Natural killer cell (primary cell): ENCODE measurements at regions of chr13 and their contacts with region 1.

Region 1: DNA sequence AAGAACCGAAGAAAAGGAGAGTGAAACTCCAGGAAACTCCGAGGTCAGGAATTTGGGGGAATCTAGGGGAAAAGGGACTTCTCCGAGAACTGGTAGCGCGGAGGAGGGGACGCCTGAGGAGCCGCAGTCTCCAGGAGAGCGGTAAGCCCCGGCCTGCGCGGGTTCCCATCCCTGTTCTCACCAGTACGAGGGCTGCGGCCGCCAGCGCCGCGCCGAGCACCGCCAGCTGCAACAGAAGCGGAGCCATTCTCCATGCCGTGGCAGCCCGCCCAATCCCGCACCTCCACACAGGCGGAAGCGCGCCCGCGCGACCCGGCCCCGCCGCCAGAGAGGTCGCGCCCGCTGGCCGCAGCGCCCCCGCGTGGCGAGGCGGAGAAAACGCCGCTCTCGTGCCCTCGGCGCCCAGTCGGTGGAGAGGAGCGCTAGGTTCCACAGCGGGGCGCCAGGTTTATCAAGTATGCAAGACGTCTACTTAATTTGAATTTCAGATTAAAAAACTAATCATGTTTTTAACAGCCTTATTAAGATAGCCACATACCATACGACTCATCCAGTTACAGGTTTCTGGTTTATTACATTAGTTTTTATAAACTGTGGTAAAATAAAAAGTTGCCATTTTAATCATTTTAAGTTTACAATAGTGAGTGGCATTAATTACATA is at the start of gene ALG5:
- DNase-seq: peak; percentile 95 to 97
- ATAC-seq: peak; percentile 74 to 91 (median 78)
- H3K4me3 ChIP-seq: peak within 1 kb of the TSS; percentile 84
- H3K4me3 Mint-ChIP-seq: peak within 1 kb of the TSS; percentile 99
- H3K27ac ChIP-seq: peak within 1 kb of the TSS; percentile 99
- H3K27ac Mint-ChIP-seq: peak within 1 kb of the TSS; percentile 99 to 100
- H3K4me1 ChIP-seq: peaks cover 15% of the 10 kb centered on the region
- H3K4me1 Mint-ChIP-seq: peaks cover 33 to 46% of the 10 kb centered on the region in 2 donors
- H3K27me3 ChIP-seq: no peaks in the 10 kb centered on the region
- H3K27me3 Mint-ChIP-seq: no peaks in the 10 kb centered on the region
- CTCF ChIP-seq: peak; percentile 99
- total RNA-seq, gene ALG5: 20.2 to 25.0 (median 24.5) TPM

Region 2: DNA sequence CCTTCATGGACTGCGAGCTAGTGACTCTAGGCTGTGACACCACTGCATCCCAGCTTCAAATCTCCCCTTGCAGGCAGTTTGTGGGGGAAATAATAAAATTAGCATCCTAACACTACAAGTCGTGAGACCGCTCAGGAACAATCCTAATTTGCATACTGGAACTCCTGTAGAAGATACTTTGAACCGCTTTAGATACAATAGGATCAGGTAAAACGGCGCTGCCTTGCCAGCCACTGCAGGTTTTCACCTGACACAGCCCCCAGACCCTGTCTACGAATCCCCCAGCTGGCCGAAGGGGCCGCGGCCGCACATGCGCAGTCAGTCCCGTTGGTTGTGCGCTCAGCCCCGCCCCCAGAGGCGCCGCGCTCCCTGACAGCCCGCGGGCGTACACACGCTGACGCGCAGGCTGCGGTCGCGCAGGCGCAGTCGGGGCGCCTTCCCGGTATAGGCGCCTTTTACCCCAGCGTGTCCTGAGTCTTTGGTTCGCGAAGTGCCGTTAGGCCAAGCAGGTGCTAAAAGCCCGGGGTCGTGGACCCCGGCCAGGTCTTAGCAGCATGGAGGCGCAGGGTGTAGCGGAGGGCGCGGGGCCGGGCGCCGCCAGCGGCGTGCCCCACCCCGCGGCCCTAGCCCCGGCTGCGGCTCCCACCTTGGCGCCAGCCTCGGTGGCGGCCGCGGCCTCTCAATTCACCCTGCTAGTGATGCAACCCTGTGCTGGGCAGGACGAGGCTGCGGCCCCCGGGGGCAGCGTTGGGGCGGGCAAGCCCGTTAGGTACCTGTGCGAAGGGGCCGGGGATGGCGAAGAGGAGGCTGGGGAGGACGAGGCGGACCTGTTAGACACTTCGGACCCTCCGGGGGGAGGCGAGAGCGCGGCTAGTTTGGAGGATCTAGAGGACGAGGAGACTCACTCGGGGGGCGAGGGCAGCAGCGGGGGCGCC is 180.1 kb before region 1 on chr13 and contains the start of gene RFXAP:
- intact Hi-C with region 1: loop called (anchors 5 kb)
- DNase-seq: peak; percentile 90 to 97
- ATAC-seq: peak; percentile 91 to 95 (median 92)
- H3K4me3 ChIP-seq: peak within 1 kb of the TSS; percentile 78
- H3K4me3 Mint-ChIP-seq: peak within 1 kb of the TSS; percentile 95
- H3K27ac ChIP-seq: peak within 1 kb of the TSS; percentile 80
- H3K27ac Mint-ChIP-seq: peak within 1 kb of the TSS; percentile 87 to 90
- H3K4me1 ChIP-seq: peaks cover 19% of the 10 kb centered on the region
- H3K4me1 Mint-ChIP-seq: peaks cover 42 to 45% of the 10 kb centered on the region in 2 donors
- H3K27me3 ChIP-seq: no peaks in the 10 kb centered on the region
- H3K27me3 Mint-ChIP-seq: peaks cover 17 to 21% of the 10 kb centered on the region in 2 donors
- CTCF ChIP-seq: no peak
- total RNA-seq, gene RFXAP: 6.0 to 13.3 (median 11.3) TPM

Region 3: DNA sequence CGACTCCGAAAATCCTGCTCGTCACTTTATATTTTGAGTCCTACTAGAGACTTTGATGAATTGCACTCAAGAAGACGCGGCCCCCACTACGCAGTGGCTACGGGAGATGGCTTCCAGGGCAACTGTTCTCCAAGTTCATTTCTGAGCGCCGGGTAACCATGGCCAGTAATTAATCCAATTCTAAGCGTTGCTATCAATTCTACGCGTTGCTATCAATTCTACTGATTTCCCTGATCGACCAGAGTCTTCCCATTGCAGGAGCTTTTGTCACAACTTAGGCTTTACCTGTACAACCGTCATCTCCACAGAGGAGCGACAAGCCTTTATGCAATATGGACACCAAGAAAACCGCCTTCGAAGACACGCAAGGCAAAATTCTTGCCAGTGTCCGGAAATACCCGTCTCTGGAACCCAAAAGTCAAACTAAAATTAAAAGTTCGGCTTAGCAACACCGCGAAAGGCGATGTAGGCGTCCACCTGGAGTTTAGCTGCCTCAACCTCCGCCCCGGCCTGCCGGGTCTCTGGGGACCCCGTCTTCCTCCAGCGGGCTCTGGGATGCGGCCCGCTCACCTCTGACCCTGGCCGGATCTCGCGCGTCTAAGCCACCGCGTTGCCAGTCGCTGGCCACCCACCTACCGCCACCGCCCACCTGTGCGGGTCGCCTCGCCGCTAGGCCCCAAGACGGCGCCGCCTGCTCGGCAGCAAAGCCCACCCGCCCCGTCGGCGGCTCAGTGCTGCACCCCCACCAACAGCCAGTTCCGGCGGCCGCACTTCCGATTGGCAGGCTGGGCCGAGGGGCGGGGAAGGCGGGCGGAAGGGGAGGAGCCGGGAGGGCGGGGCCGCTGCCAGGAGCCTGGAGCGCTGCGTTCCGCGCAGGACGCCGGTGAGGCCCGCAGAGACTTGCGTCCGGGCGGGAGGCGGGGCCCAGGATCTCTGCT is 60.0 kb after region 1 on chr13 and contains the start of gene SUPT20H:
- intact Hi-C with region 1: loop called (anchors 1 kb)
- DNase-seq: peak; percentile 88 to 95
- ATAC-seq: peak; percentile 96 to 100 (median 97)
- H3K4me3 ChIP-seq: peak within 1 kb of the TSS; percentile 92
- H3K4me3 Mint-ChIP-seq: peak within 1 kb of the TSS; percentile 95
- H3K27ac ChIP-seq: peak within 1 kb of the TSS; percentile 93
- H3K27ac Mint-ChIP-seq: peak within 1 kb of the TSS; percentile 96 to 99
- H3K4me1 ChIP-seq: peaks cover 10% of the 10 kb centered on the region
- H3K4me1 Mint-ChIP-seq: peaks cover 27 to 33% of the 10 kb centered on the region in 2 donors
- H3K27me3 ChIP-seq: no peaks in the 10 kb centered on the region
- H3K27me3 Mint-ChIP-seq: peaks cover 9 to 26% of the 10 kb centered on the region in 2 donors
- CTCF ChIP-seq: no peak
- total RNA-seq, gene SUPT20H: 59.8 to 84.7 (median 64.6) TPM